ENCODE measurements at regions of chr6 and their contacts with region 1.

Region 1: DNA sequence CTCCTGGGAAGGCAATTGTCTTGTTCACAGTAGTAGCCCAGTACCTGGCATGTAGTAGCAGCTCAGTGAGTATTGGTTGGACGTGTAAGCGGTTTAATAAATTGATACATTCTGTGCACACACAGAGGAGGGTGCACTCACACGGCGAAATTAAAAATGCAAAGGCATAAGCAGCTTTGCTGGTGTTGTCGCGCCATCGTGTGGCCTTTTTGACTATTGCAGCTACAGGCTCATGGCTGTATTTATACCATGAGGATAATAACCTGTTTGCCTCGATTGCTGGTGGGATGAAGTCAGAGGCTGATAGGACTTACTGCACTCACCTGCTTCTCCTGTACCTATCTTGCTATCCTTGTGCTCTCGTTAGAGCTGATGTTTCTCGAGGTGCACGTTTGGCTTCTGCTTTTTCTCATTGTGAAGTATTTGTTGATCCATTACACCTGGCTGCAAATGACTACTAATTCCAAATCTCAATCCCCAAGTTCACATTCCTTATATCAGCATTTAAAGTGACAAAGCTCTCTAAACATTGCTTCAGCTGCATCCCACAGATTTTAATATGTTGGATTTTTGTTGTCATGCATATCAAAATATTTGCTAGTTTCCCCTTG is 61.5 kb downstream of the TBXT start:
- DNase-seq: peak; percentile 52 to 88
- H3K4me3 ChIP-seq: no peak overlapping the region
- H3K4me1 ChIP-seq: no peaks in the 10 kb centered on the region
- H3K27me3 ChIP-seq: peaks cover 4% of the 10 kb centered on the region

Region 2: DNA sequence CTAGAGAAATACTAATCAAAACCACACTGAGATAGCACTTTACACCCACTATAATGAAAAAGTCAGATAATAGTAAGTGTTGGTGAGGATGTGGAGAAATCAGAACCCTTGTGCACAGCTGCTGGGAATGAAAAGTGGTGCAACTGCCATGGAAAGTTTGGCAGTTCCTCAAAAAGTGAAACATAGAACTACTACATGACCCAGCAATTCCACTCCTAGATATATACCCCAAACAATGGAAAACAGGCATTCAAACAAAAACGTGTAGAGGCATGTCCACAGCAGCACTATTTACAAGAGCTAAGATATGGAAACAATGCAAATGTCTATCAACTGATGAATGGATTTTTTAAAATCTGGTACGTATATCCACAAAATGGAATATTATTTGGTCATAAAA is 679.3 kb before region 1 on chr6:
- in situ Hi-C with region 1: no loop called
- DNase-seq: no peak
- H3K4me3 ChIP-seq: no peak overlapping the region
- H3K4me1 ChIP-seq: no peaks in the 10 kb centered on the region
- H3K27me3 ChIP-seq: no peaks in the 10 kb centered on the region

Region 3: GRCh38 chr6:165704045-165704748 is 402.0 kb before region 1 on chr6:
- in situ Hi-C with region 1: loop called (anchors 25 kb)
- DNase-seq: peak in 1 of 2 experiments; percentile 24
- H3K4me3 ChIP-seq: no peak overlapping the region
- H3K4me1 ChIP-seq: peaks cover 16% of the 10 kb centered on the region
- H3K27me3 ChIP-seq: no peaks in the 10 kb centered on the region